ENCODE measurements at regions of chr2 and their contacts with region 1.

Region 1: DNA sequence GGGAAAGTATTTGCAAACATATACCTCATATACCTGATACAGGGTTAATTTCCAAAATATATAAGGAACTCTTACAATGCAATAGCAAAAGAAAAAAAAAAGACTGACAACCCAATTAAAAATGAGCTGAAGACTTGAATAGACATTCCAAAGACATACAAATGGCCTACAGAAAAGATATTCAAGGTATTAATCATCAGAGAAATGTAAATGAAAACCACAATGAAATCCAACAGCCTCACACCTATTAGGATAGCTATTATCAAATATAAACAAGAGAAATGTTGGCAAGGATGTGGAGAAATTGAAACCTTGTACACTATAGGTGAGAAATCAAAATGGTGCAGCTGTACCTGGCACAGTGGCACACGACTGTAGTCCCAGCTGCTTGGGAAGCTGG is 25.7 kb downstream of the NR4A2 start:
- DNase-seq: no peak
- ATAC-seq: no peak
- H3K4me3 ChIP-seq: no peak overlapping the region
- H3K27ac ChIP-seq: no peak overlapping the region
- H3K4me1 ChIP-seq: no peaks in the 10 kb centered on the region; the same call in 1 of the 2 replicates
- H3K27me3 ChIP-seq: no peaks in the 10 kb centered on the region
- CTCF ChIP-seq: no peak
- EP300 ChIP-seq: no peak
- POLR2A ChIP-seq: no peak
- RAD21 ChIP-seq: no peak

Region 2: GRCh38 chr2:156294945-156295580 is 11.8 kb before region 1 on chr2:
- CTCF ChIA-PET with region 1: no interaction called
- POLR2A ChIA-PET with region 1: no interaction called
- RAD21 ChIA-PET with region 1: no interaction called
- SMC1A ChIA-PET with region 1: no interaction called
- in situ Hi-C with region 1: no loop called
- intact Hi-C with region 1: no loop called
- DNase-seq: no peak
- ATAC-seq: no peak
- H3K4me3 ChIP-seq: no peak overlapping the region
- H3K27ac ChIP-seq: no peak overlapping the region
- H3K4me1 ChIP-seq: no peaks in the 10 kb centered on the region
- H3K27me3 ChIP-seq: no peaks in the 10 kb centered on the region
- CTCF ChIP-seq: no peak
- EP300 ChIP-seq: no peak
- POLR2A ChIP-seq: no peak
- RAD21 ChIP-seq: no peak

Region 3: GRCh38 chr2:156363141-156363540 is 56.3 kb after region 1 on chr2:
- CTCF ChIA-PET with region 1: no interaction called
- POLR2A ChIA-PET with region 1: no interaction called
- RAD21 ChIA-PET with region 1: no interaction called
- SMC1A ChIA-PET with region 1: no interaction called
- in situ Hi-C with region 1: no loop called
- intact Hi-C with region 1: no loop called
- DNase-seq: no peak
- ATAC-seq: no peak
- H3K4me3 ChIP-seq: no peak overlapping the region
- H3K27ac ChIP-seq: no peak overlapping the region
- H3K4me1 ChIP-seq: no peaks in the 10 kb centered on the region
- H3K27me3 ChIP-seq: no peaks in the 10 kb centered on the region; a peak in 1 of 4 replicates
- CTCF ChIP-seq: no peak
- EP300 ChIP-seq: no peak
- POLR2A ChIP-seq: no peak
- RAD21 ChIP-seq: no peak

Region 4: DNA sequence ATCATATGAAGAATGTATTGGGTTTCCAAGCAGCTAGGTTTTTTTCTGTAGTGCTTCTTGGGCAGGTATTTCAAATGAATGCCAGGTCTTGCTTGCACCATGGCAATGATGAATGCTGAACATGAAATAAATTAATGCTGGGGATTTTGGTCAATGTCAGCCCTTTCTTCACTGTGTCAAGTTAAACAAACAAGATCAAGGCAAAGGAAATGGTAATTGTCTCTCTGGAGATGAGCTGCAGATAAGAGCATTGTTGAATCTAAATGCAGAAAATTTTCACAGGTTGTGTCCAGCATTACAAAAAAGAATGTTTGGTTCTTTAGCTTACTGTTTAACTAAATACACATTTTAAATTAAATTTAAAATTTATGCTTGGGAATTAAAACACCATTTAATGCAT is 273.7 kb after region 1 on chr2:
- CTCF ChIA-PET with region 1: no interaction called
- POLR2A ChIA-PET with region 1: interaction called, 10 read pairs
- RAD21 ChIA-PET with region 1: no interaction called
- SMC1A ChIA-PET with region 1: no interaction called
- in situ Hi-C with region 1: no loop called
- intact Hi-C with region 1: no loop called
- DNase-seq: no peak
- ATAC-seq: no peak
- H3K4me3 ChIP-seq: no peak overlapping the region
- H3K27ac ChIP-seq: no peak overlapping the region
- H3K4me1 ChIP-seq: no peaks in the 10 kb centered on the region; the same call in 1 of the 2 replicates
- H3K27me3 ChIP-seq: no peaks in the 10 kb centered on the region
- CTCF ChIP-seq: no peak
- EP300 ChIP-seq: no peak
- POLR2A ChIP-seq: no peak
- RAD21 ChIP-seq: no peak

Region 5: GRCh38 chr2:156982615-156983014 is 675.8 kb after region 1 on chr2:
- CTCF ChIA-PET with region 1: no interaction called
- POLR2A ChIA-PET with region 1: no interaction called
- RAD21 ChIA-PET with region 1: no interaction called
- SMC1A ChIA-PET with region 1: no interaction called
- in situ Hi-C with region 1: no loop called
- intact Hi-C with region 1: no loop called
- DNase-seq: no peak
- ATAC-seq: no peak
- H3K4me3 ChIP-seq: no peak overlapping the region
- H3K27ac ChIP-seq: no peak overlapping the region
- H3K4me1 ChIP-seq: no peaks in the 10 kb centered on the region
- H3K27me3 ChIP-seq: peaks cover 0 to 4% of the 10 kb centered on the region in 2 experiments; a peak in 1 of 4 replicates
- CTCF ChIP-seq: no peak
- EP300 ChIP-seq: no peak
- POLR2A ChIP-seq: no peak
- RAD21 ChIP-seq: no peak

Measured in GM12878 (cell line).